OCI-LY7 (cell line): ENCODE measurements at regions of chr7 and their contacts with region 1.

Region 1: DNA sequence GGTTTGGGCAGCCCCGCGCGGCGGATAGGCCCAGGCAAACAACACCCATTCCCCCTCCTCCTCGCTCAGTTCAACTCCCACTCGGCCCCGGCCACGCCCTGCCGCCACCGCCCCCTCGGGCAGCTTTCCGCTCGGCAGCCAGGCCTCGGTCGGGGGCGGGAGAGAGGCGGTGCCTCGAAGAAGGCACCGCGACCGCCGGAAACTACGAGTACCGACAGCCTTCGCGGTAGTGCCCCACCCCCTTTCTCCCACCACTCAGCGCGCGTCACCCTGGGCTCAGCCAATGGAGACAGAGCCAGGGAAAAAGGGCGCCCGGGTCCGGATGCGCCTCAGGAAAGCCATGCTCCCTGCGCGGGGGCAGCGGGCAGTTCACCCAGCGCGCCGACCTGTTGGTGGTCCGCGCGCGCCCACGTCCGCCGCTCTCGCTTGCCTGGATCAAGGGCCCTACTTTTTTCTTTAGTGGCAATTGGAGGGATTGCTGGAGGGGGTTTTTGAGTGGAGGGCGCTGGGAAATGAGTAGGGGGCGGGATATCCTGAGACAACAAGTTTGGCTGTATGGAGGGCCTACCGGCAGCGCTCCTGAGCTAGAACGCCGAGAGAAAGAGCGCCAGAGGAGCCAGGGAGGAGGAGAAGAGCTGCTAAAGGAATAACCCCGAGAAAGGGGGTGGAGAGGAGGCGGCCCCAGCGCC is 557 bp upstream of the SP4 start:
- DNase-seq: peak; percentile 98
- H3K4me3 ChIP-seq: peak overlapping the region; percentile 88
- H3K27ac ChIP-seq: peak overlapping the region; percentile 86
- H3K4me1 ChIP-seq: peaks cover 42% of the 10 kb centered on the region
- CTCF ChIP-seq: no peak

Region 2: GRCh38 chr7:22082886-22083703 is 655.8 kb after region 1 on chr7:
- CTCF ChIA-PET with region 1: no interaction called
- POLR2A ChIA-PET with region 1: no interaction called
- intact Hi-C with region 1: loop called (anchors 1 kb)
- DNase-seq: peak; percentile 79
- H3K4me3 ChIP-seq: peak overlapping the region; percentile 69
- H3K27ac ChIP-seq: no peak overlapping the region
- H3K4me1 ChIP-seq: peaks cover 5% of the 10 kb centered on the region
- CTCF ChIP-seq: peak; percentile 93